Transverse colon (tissue), 4 donors: ENCODE measurements at regions of chrX and their contacts with region 1.

Region 1: DNA sequence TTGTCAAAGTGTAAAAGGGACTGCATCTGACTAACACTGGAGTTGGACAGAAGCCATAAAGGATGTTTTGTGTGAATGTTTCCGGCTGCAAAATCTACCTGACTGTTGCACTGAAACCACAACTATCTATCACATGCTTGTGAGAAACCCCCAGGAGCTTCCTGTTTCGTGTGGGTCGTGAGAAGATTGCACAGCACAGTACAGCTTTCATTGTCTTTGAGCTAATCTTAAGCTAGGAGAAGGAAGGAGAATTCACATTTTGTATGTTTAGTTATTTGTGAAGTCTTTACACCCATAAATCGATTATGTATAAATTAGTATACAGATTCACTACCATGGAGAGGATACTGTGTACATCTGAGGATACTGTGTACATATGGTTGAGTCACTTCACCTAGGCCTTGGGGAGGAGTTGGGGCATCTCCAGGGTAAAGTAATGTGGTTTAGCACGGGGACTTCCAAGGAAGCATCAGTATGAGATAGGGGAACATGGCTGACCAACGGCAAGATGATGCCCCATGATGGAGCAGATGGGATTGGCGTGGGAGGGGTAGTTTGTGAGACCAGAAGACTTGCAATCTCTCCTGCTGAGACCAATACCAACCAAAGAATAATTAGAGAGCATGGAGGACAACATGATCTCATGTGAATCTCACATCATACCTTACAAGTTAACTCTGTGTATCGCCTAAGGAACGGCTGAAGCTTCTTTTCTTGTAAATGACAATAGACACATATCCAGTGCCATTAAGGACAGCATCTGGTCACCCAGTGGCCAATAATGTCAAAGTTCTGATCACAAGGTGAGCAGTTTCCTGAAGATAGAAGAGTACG is 43.1 kb upstream of the FAM9C start:
- DNase-seq: peak; percentile 45
- H3K4me3 ChIP-seq: no peak overlapping the region
- H3K27ac ChIP-seq: peak overlapping the region; percentile 12 to 50 (median 28)
- H3K4me1 ChIP-seq: peaks cover 0 to 19% (median 0%) of the 10 kb centered on the region in 4 donors
- H3K27me3 ChIP-seq: no peaks in the 10 kb centered on the region
- CTCF ChIP-seq: no peak
- EP300 ChIP-seq: no peak
- POLR2A ChIP-seq: no peak

Region 2: GRCh38 chrX:13029831-13030771 is 57.4 kb before region 1 on chrX:
- in situ Hi-C with region 1: no loop called
- intact Hi-C with region 1: loop called (anchors 10 kb)
- DNase-seq: peak; percentile 64
- H3K4me3 ChIP-seq: no peak overlapping the region
- H3K27ac ChIP-seq: peak overlapping the region; percentile 67 to 82 (median 76)
- H3K4me1 ChIP-seq: peaks cover 0 to 29% (median 10%) of the 10 kb centered on the region in 4 donors
- H3K27me3 ChIP-seq: no peaks in the 10 kb centered on the region
- CTCF ChIP-seq: no peak
- EP300 ChIP-seq: no peak
- POLR2A ChIP-seq: no peak